Mucosa of descending colon (tissue), 3 donors: ENCODE measurements at regions of chr2 and their contacts with region 1.

Region 1: GRCh38 chr2:62456721-62457539 is 49.1 kb downstream of the TMEM17 start:
- DNase-seq: peak; percentile 74 to 86 (median 76)
- ATAC-seq: peak; percentile 96
- H3K4me3 ChIP-seq: no peak overlapping the region
- H3K4me1 ChIP-seq: no peaks in the 10 kb centered on the region
- CTCF ChIP-seq: peak; percentile 93

Region 2: GRCh38 chr2:62760555-62760954 is 303.6 kb after region 1 on chr2:
- intact Hi-C with region 1: no loop called
- DNase-seq: no peak
- ATAC-seq: peak; percentile 26
- H3K4me3 ChIP-seq: no peak overlapping the region
- H3K4me1 ChIP-seq: no peaks in the 10 kb centered on the region
- CTCF ChIP-seq: no peak

Region 3: DNA sequence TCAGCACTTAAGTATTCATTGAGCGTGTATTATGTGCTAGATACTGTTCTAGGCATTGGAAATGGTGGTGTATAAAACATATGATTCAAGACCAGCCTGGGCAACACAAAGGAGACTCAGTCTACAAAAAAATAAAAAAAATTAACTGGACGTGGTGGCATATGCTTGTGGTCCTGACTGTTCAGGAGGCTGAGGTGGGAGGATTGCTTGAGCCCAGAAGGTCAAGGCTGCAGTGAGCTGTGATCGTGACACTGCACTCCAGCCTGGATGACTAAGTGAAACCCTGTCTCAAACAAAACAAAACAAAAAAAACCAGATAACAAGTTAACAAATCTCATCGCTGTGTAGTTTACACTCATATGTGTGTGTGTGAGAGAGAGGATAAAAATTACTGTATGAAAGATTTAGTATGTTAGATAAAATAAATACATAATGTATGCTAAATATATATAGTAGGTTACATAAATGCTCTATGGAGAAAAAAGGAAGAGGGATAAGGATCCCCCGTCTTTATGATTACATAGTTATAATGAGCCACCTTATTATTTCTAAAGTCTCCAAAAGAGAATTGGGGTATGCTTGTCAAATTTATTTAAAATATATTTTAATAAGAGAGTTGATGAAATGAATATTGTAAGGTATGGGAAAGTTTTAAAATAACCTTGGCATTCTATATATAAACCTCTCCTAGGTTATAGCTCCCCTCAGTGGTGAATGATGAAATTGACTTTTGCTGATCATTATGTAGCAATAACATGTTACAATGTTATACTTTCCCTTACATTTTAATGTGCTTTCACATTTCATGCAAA is 317.8 kb after region 1 on chr2:
- intact Hi-C with region 1: loop called (anchors 2 to 5 kb)
- DNase-seq: peak in 1 of 3 donors; percentile 57
- ATAC-seq: peak; percentile 67
- H3K4me3 ChIP-seq: no peak overlapping the region
- H3K4me1 ChIP-seq: no peaks in the 10 kb centered on the region
- CTCF ChIP-seq: peak; percentile 35